Gastrocnemius medialis (tissue), 4 donors: ENCODE measurements at regions of chr17 and their contacts with region 1.

Region 1: DNA sequence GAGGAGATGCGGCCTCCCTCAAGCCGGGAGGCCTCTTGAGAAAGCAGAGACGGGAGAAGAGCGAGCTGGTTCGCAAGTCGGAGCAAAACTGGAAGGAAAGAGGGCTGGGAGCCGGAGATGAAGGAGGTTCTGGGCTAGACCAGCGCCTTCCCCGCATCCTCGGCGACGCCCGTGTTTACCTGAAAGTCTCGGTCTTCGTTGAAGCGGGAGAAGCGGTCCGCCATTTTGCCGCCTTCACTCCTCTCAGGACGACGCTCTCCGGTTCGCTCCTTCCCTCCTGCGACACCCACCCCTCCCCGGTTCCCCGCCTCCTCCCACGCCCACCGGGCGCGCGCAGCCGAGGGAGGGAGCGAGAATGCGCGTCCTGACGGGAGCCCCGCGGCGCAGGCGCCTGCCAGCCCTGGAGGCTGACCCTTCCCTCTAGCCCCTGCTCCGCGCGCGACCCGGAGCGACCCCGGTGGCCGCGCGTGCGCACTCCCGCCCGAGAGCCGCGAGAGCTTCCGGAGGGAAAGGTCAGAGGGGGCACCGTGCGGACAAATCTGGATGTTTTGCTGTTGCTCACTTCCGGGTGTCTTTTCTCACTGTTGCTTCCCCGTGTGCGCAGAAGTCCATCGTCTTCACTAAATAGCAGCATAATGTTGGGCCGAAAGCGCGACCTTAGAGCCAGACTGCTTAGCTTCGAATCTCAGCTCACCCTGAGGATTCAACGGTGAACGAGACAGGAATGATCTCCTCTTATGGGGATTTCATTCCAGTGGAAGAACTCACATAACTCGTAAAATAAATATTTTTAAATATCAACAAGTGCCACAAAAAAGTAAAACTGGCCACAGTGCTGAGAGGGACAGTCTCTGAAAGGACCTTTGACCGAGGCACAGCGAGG is at the start of gene GPATCH8:
- DNase-seq: peak; percentile 91 to 94
- ATAC-seq: peak; percentile 88 to 90
- H3K4me3 ChIP-seq: peak within 1 kb of the TSS; percentile 86 to 99 (median 87)
- H3K27ac ChIP-seq: peak within 1 kb of the TSS; percentile 92 to 99 (median 96)
- H3K4me1 ChIP-seq: peaks cover 35 to 39% of the 10 kb centered on the region in 2 donors
- H3K27me3 ChIP-seq: no peaks in the 10 kb centered on the region
- CTCF ChIP-seq: no peak
- POLR2A ChIP-seq: peak; percentile 80 to 88
- total RNA-seq, gene GPATCH8: 39.9 to 75.1 (median 50.8) TPM

Region 2: GRCh38 chr17:44199553-44200477 is 303.6 kb before region 1 on chr17 and contains the start of gene ATXN7L3:
- in situ Hi-C with region 1: loop called in 3 of 4 experiments (anchors 25 kb)
- intact Hi-C with region 1: no loop called
- DNase-seq: peak; percentile 99
- ATAC-seq: peak; percentile 80 to 82
- H3K4me3 ChIP-seq: peak within 1 kb of the TSS; percentile 82 to 96 (median 86)
- H3K27ac ChIP-seq: peak within 1 kb of the TSS; percentile 94 to 98 (median 95)
- H3K4me1 ChIP-seq: peaks cover 9 to 15% of the 10 kb centered on the region in 2 donors
- H3K27me3 ChIP-seq: no peaks in the 10 kb centered on the region
- CTCF ChIP-seq: no peak
- POLR2A ChIP-seq: peak; percentile 59 to 65
- total RNA-seq, gene ATXN7L3: 39.3 to 46.0 (median 40.6) TPM

Region 3: DNA sequence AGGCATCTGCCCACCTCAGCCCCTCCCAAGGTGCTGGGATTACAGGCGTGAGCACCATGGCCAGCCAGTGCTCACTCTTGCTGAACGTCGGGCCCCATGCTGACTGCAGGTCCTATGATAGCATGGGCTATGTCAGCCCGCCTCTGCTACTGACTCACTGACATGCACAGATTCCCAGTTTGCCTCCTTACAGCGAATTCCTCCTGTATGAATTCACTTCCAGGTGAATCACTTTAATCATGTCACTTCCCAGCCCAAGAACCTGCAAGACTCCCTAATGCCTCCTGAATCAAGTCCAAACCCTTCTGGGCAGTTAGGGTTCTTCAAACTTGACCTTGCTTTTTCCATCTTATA is 267.8 kb before region 1 on chr17:
- in situ Hi-C with region 1: loop called in 1 of 4 experiments (anchors 25 kb)
- intact Hi-C with region 1: no loop called
- DNase-seq: no peak
- ATAC-seq: no peak
- H3K4me3 ChIP-seq: no peak overlapping the region
- H3K27ac ChIP-seq: no peak overlapping the region
- H3K4me1 ChIP-seq: peaks cover 0 to 4% of the 10 kb centered on the region in 2 donors
- H3K27me3 ChIP-seq: no peaks in the 10 kb centered on the region
- CTCF ChIP-seq: no peak
- POLR2A ChIP-seq: no peak

Region 4: GRCh38 chr17:44417553-44417952 is 85.8 kb before region 1 on chr17:
- in situ Hi-C with region 1: loop called in 1 of 4 experiments (anchors 10 kb)
- intact Hi-C with region 1: loop called (anchors 1 kb)
- DNase-seq: peak in 1 of 2 donors; percentile 20
- ATAC-seq: peak; percentile 95 to 96
- H3K4me3 ChIP-seq: no peak overlapping the region
- H3K27ac ChIP-seq: peak overlapping the region; percentile 65 to 76 (median 71)
- H3K4me1 ChIP-seq: peaks cover 4 to 12% of the 10 kb centered on the region in 2 donors
- H3K27me3 ChIP-seq: no peaks in the 10 kb centered on the region
- CTCF ChIP-seq: no peak
- POLR2A ChIP-seq: no peak

Region 5: DNA sequence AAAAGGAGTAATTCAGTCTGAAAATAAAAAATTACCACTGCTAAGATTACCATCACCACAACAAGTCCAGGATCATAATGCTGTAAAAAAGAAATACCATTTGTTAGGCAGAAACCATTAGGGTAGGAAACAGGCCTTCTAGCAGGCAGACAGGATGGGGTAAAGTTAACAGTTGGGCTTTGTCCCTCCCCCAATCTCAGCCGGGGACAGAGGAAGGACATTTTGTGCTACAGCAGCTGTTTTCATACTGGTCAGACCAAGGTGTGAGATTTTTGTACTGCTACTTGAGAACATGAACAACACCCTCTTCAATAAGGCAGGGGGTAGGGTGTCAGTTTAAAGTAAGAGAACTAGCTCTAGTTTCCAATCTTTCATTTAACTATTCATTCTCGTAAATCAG is 64.8 kb before region 1 on chr17:
- in situ Hi-C with region 1: no loop called
- intact Hi-C with region 1: loop called (anchors 1 kb)
- DNase-seq: peak; percentile 77 to 85
- ATAC-seq: peak; percentile 98
- H3K4me3 ChIP-seq: peak overlapping the region in 3 of 4 donors; percentile 5 to 22 (median 18)
- H3K27ac ChIP-seq: peak overlapping the region; percentile 84 to 94 (median 89)
- H3K4me1 ChIP-seq: peaks cover 56 to 58% of the 10 kb centered on the region in 2 donors
- H3K27me3 ChIP-seq: no peaks in the 10 kb centered on the region
- CTCF ChIP-seq: no peak
- POLR2A ChIP-seq: no peak